SK-N-SH (cell line): ENCODE measurements at regions of chr17 and their contacts with region 1.

Region 1: DNA sequence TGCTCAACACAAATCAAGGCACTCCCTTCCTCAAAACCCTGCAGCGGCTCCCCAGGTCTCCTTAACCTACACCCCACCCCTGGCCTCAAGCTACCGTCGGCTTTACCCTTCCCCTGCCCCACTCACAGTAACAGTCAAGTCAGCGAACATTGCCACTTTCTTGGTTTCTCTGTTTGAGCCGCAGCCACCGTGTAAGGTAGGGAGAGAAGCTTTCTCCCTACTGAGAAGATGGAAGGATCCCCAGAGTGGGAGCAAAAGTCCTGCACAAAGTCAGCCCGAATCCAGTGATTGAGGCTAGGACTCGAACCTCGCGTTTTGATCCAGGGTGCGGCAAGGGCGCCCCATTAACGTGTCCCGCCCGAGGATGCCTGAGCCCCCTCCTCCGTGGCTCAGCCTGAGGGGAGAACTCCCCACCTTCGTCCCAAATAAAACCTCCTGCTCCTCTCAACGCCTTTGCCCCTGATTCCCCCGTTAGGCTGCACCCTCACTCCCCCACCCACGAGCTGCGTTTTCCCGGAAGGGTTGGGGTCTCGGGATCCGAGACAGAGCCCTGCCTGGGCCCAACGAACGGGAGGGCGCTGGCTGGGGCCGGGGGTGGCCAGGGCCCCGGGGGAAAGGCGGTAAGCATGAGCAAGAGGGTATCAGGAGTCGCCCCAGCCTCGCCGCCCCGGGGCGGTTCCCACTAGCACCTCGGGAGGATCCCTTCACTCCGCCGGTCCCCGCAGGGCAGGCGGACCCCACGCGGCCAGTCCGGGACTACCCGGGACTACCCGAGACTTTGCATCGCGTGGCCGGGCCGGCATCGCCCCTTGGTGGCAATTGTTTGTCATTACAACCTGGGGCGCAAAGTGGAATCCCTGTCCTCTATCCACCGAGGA is 9.9 kb upstream of the NAGS start:
- DNase-seq: peak; percentile 91
- H3K4me3 ChIP-seq: peak overlapping the region; percentile 33 to 53; a peak in 3 of 4 replicates
- H3K27ac ChIP-seq: no peak overlapping the region
- H3K4me1 ChIP-seq: peaks cover 3 to 5% of the 10 kb centered on the region in 2 experiments; a peak in 3 of 4 replicates
- H3K27me3 ChIP-seq: no peaks in the 10 kb centered on the region
- CTCF ChIP-seq: peak; percentile 87
- EP300 ChIP-seq: no peak
- RAD21 ChIP-seq: peak; percentile 98

Region 2: GRCh38 chr17:43878260-43879175 is 116.0 kb before region 1 on chr17:
- CTCF ChIA-PET with region 1: interaction called, 22 read pairs
- POLR2A ChIA-PET with region 1: no interaction called
- DNase-seq: peak; percentile 91
- H3K4me3 ChIP-seq: no peak overlapping the region
- H3K27ac ChIP-seq: no peak overlapping the region
- H3K4me1 ChIP-seq: peaks cover 0 to 2% of the 10 kb centered on the region in 2 experiments; a peak in 1 of 4 replicates
- H3K27me3 ChIP-seq: no peaks in the 10 kb centered on the region
- CTCF ChIP-seq: peak; percentile 89
- EP300 ChIP-seq: no peak
- RAD21 ChIP-seq: peak; percentile 80

Region 3: DNA sequence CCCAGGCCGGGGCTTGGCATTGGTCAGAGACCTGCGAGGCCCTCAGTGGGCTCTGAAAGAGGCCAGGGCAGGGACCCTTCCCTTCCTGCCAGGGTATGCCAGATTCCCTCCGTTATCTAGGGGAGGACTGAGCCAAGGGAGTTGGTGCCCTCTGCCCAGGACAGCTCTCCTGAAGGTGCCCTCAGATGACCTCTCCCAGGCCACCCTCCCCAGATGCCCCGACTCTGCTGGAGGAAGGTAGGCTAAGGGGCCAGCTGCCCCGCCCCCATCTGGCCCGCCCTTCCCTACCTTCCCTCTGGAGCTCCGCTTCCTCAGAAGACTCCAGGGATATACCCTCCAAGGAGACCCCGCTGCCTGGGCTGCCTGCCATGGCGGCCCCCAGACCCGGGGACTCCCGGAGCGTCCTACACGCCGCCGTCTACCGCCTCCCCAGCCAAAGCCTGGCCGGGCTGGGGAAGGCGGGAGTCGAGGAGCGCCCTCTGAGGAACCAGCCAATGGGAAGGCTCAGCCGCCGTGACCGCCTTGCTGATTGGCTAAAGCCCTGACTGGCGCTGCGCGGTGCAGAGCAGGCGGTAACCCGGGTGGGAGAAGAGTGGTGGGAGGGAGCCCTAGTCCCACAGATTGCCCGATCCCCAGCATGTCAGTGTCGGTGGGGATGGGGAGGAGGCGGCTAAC is 94.2 kb before region 1 on chr17:
- CTCF ChIA-PET with region 1: interaction called, 17 read pairs
- POLR2A ChIA-PET with region 1: no interaction called
- DNase-seq: peak; percentile 98
- H3K4me3 ChIP-seq: peak overlapping the region; percentile 56 to 66
- H3K27ac ChIP-seq: no peak overlapping the region; a peak in 1 of 4 replicates
- H3K4me1 ChIP-seq: peaks cover 7 to 20% of the 10 kb centered on the region in 2 experiments; a peak in 2 of 4 replicates
- H3K27me3 ChIP-seq: no peaks in the 10 kb centered on the region
- CTCF ChIP-seq: no peak
- EP300 ChIP-seq: no peak
- RAD21 ChIP-seq: no peak

Region 4: DNA sequence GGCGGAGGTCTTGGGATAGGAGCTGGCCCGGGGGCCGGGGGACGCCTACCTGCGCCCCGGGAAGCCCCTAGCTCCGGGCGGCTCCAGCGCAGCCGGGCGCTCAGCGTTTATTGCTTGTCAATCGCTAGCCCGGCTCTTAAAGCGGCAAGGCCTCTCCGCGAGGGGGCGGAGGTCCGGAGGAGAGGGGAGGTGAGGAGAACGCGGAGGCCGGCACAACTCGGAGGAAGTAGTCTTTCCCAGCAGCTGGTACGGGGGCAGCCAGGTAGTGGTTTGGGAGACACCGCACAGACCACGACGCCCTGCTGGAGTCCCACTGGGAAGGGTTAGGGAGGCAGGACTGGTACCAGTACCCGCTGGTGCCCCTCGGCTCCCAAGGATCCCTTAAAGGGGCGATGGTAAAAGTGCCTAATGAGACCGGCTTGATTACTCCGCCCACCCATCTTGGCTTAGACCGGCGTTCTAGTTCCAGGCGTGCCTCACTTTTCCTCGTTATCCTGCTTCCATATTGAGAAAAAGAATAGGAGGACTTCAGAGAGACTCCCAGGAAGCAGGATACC is 87.0 kb before region 1 on chr17 and contains the start of gene MPP2:
- CTCF ChIA-PET with region 1: interaction called, 46 read pairs
- POLR2A ChIA-PET with region 1: no interaction called
- DNase-seq: peak; percentile 86
- H3K4me3 ChIP-seq: peak within 1 kb of the TSS; percentile 66 to 91
- H3K27ac ChIP-seq: peak within 1 kb of the TSS; percentile 24 to 91; a peak in 3 of 4 replicates
- H3K4me1 ChIP-seq: peaks cover 9 to 16% of the 10 kb centered on the region in 2 experiments; a peak in 2 of 4 replicates
- H3K27me3 ChIP-seq: peaks cover 7% of the 10 kb centered on the region; the same call in 1 of the 2 replicates
- CTCF ChIP-seq: peak; percentile 20; the same call in 1 of the 2 replicates
- EP300 ChIP-seq: no peak
- RAD21 ChIP-seq: no peak
- polyA plus RNA-seq, gene MPP2: 8.1 and 8.3 TPM in 2 replicates

Region 5: DNA sequence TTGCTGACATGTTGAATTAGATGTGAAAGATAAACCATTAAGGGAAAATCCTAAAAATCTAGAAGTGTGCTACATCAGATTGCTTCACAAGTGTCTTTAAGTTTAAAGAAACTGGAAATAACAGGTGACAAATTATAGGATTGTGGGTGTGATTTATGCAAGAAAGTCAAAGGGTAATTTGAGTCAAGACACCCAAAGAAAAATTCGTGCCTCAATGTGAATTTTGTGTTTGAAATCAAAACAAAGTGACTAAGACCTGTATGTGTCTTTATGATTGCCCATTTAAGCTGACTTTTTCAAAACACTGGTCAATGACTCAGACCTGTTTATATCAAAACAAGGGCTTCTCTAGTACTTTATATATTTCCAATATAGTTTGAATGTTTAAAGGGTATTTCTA is 35.6 kb before region 1 on chr17:
- CTCF ChIA-PET with region 1: interaction called, 17 read pairs
- POLR2A ChIA-PET with region 1: no interaction called
- DNase-seq: no peak
- H3K4me3 ChIP-seq: no peak overlapping the region
- H3K27ac ChIP-seq: no peak overlapping the region
- H3K4me1 ChIP-seq: no peaks in the 10 kb centered on the region
- H3K27me3 ChIP-seq: no peaks in the 10 kb centered on the region; the same call in 1 of the 2 replicates
- CTCF ChIP-seq: no peak
- EP300 ChIP-seq: no peak
- RAD21 ChIP-seq: no peak

Region 6: GRCh38 chr17:43983515-43984411 is 10.7 kb before region 1 on chr17:
- CTCF ChIA-PET with region 1: interaction called, 52 read pairs
- POLR2A ChIA-PET with region 1: no interaction called
- DNase-seq: peak; percentile 72
- H3K4me3 ChIP-seq: peak overlapping the region; percentile 41 to 54
- H3K27ac ChIP-seq: no peak overlapping the region
- H3K4me1 ChIP-seq: peaks cover 0 to 14% of the 10 kb centered on the region in 2 experiments; a peak in 1 of 4 replicates
- H3K27me3 ChIP-seq: peaks cover 14% of the 10 kb centered on the region; the same call in 1 of the 2 replicates
- CTCF ChIP-seq: peak; percentile 39; the same call in 1 of the 2 replicates
- EP300 ChIP-seq: no peak
- RAD21 ChIP-seq: no peak; the same call in 1 of the 2 replicates

Region 7: GRCh38 chr17:44006598-44007345 is 12.3 kb after region 1 on chr17:
- CTCF ChIA-PET with region 1: interaction called, 15 read pairs
- POLR2A ChIA-PET with region 1: no interaction called
- DNase-seq: peak; percentile 98
- H3K4me3 ChIP-seq: peak overlapping the region; percentile 80 to 90
- H3K27ac ChIP-seq: peak overlapping the region; percentile 57 to 62; a peak in 3 of 4 replicates
- H3K4me1 ChIP-seq: peaks cover 8 to 47% of the 10 kb centered on the region in 2 experiments; a peak in 2 of 4 replicates
- H3K27me3 ChIP-seq: no peaks in the 10 kb centered on the region
- CTCF ChIP-seq: peak; percentile 69
- EP300 ChIP-seq: no peak
- RAD21 ChIP-seq: peak; percentile 63

Region 8: GRCh38 chr17:44123356-44124117 is 129.0 kb after region 1 on chr17 and contains the start of gene HDAC5:
- CTCF ChIA-PET with region 1: no interaction called
- POLR2A ChIA-PET with region 1: no interaction called
- DNase-seq: peak; percentile 99
- H3K4me3 ChIP-seq: peak within 1 kb of the TSS; percentile 72 to 78
- H3K27ac ChIP-seq: peak within 1 kb of the TSS; percentile 74 to 82
- H3K4me1 ChIP-seq: peaks cover 4 to 26% of the 10 kb centered on the region in 2 experiments; a peak in 2 of 4 replicates
- H3K27me3 ChIP-seq: no peaks in the 10 kb centered on the region
- CTCF ChIP-seq: peak; percentile 66
- EP300 ChIP-seq: no peak
- RAD21 ChIP-seq: peak; percentile 43
- polyA plus RNA-seq, gene HDAC5: 19.0 and 21.0 TPM in 2 replicates

Region 9: GRCh38 chr17:44247440-44247841 is 252.9 kb after region 1 on chr17:
- CTCF ChIA-PET with region 1: no interaction called
- POLR2A ChIA-PET with region 1: no interaction called
- DNase-seq: peak; percentile 63
- H3K4me3 ChIP-seq: no peak overlapping the region
- H3K27ac ChIP-seq: no peak overlapping the region; a peak in 1 of 4 replicates
- H3K4me1 ChIP-seq: peaks cover 0 to 15% of the 10 kb centered on the region in 2 experiments; a peak in 1 of 4 replicates
- H3K27me3 ChIP-seq: no peaks in the 10 kb centered on the region; the same call in 1 of the 2 replicates
- CTCF ChIP-seq: no peak
- EP300 ChIP-seq: no peak
- RAD21 ChIP-seq: no peak